ENCODE measurements at regions of chr18 and their contacts with region 1.

Region 1: DNA sequence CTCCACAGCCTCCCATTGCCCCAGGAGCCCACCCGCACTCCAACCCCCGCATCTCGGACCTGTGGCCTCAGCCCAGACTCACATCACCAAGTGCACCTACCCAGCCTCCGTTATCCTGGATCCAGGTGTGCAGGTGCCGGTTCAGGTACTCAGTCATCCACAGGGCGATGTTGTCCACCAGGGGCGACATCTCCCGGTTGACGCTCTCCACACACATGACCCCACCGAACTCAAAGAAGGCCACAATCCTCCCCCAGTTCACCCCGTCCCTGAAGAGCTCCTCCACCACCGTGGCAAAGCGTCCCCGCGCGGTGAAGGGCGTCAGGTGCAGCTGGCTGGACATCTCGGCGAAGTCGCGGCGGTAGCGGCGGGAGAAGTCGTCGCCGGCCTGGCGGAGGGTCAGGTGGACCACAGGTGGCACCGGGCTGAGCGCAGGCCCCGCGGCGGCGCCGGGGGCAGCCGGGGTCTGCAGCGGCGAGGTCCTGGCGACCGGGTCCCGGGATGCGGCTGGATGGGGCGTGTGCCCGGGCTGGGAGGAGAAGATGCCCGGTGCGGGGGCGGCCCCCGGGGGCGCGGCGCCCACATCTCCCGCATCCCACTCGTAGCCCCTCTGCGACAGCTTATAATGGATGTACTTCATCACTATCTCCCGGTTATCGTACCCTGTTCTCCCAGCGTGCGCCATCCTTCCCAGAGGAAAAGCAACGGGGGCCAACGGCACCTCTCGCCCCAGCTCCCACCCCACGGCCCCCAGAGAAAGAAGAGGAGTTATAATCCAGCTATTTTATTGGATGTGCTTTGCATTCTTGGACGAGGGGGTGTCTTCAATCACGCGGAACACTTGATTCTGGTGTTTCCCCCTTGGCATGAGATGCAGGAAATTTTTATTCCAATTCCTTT is 1.3 kb downstream of the BCL2 start:
- H3K4me3 Mint-ChIP-seq: peak overlapping the region; percentile 81
- H3K27ac Mint-ChIP-seq: peak overlapping the region; percentile 80
- H3K4me1 Mint-ChIP-seq: peaks cover 43% of the 10 kb centered on the region
- H3K27me3 Mint-ChIP-seq: peaks cover 22% of the 10 kb centered on the region

Region 2: GRCh38 chr18:63131106-63131958 is 186.9 kb before region 1 on chr18:
- intact Hi-C with region 1: loop called (anchors 1 kb)
- H3K4me3 Mint-ChIP-seq: no peak overlapping the region
- H3K27ac Mint-ChIP-seq: no peak overlapping the region
- H3K4me1 Mint-ChIP-seq: peaks cover 13% of the 10 kb centered on the region
- H3K27me3 Mint-ChIP-seq: peaks cover 4% of the 10 kb centered on the region

Region 3: DNA sequence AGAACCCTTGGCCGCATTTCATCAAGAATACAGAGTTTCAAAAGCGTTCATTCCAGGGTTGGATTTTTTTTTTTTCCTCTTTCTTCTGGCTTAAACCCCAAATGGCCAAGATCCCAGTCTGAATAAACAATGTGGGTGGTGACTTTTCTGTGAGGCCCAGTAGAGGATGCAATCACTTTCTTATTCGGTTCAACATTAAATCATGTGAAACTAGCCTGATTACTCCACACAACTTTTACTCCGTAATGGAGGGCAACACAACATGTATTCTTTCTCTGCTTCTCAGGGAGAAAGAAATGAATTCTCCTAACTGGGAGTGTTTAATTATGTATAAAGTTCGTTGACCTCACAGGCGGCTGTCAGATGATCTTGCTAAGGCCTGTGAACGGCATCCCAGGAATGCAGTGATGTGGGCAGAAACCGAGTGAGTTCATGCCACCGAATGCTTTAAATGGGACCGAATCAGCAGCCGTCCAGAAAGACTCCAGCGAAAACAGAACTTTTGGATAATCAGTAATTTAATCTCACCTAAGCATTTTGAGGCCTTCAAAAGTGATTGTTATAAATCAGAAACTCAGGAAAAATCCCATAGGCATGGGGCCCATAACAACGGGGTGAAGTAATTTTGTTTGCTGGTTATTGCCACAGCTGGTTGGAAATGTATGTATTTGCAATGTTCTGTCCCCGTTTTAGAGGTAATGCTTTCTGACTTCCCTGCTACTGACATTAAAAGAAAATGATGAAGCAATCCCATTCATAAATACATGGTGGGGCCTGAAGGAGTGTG is 80.2 kb before region 1 on chr18:
- intact Hi-C with region 1: loop called (anchors 5 kb)
- H3K4me3 Mint-ChIP-seq: no peak overlapping the region
- H3K27ac Mint-ChIP-seq: peak overlapping the region; percentile 100
- H3K4me1 Mint-ChIP-seq: peaks cover 34% of the 10 kb centered on the region
- H3K27me3 Mint-ChIP-seq: no peaks in the 10 kb centered on the region

Region 4: GRCh38 chr18:63267975-63268721 is 50.1 kb before region 1 on chr18:
- intact Hi-C with region 1: loop called (anchors 10 kb)
- H3K4me3 Mint-ChIP-seq: no peak overlapping the region
- H3K27ac Mint-ChIP-seq: no peak overlapping the region
- H3K4me1 Mint-ChIP-seq: peaks cover 29% of the 10 kb centered on the region
- H3K27me3 Mint-ChIP-seq: no peaks in the 10 kb centered on the region

Measured in dendritic cell treated with granulocyte-macrophage colony-stimulating factor and Interleukin-4, amounts not matched to agents 40 ng/mL and 50 ng/mL, for 4 days (primary cell).